ENCODE measurements at regions of chr10 and their contacts with region 1.

Region 1: GRCh38 chr10:100998991-100999741 is 442 bp upstream of the LZTS2 start:
- DNase-seq: peak; percentile 27 to 89
- H3K4me3 ChIP-seq: peak overlapping the region; percentile 79 to 92
- H3K27ac ChIP-seq: peak overlapping the region; percentile 99 to 100
- H3K4me1 ChIP-seq: peaks cover 23 to 32% of the 10 kb centered on the region in 2 donors
- H3K27me3 ChIP-seq: no peaks in the 10 kb centered on the region
- CTCF ChIP-seq: peak; percentile 94 to 99 (median 96)

Region 2: GRCh38 chr10:100535715-100536353 is 463.3 kb before region 1 on chr10 and contains the start of gene HIF1AN:
- intact Hi-C with region 1: loop called (anchors 10 kb)
- DNase-seq: peak; percentile 67 to 95
- H3K4me3 ChIP-seq: peak within 1 kb of the TSS; percentile 79 to 86
- H3K27ac ChIP-seq: peak within 1 kb of the TSS; percentile 70 to 81
- H3K4me1 ChIP-seq: peaks cover 0 to 14% of the 10 kb centered on the region in 2 donors
- H3K27me3 ChIP-seq: no peaks in the 10 kb centered on the region
- CTCF ChIP-seq: peak; percentile 67 to 97 (median 92)
- total RNA-seq, gene HIF1AN: 4.7 TPM

Region 3: DNA sequence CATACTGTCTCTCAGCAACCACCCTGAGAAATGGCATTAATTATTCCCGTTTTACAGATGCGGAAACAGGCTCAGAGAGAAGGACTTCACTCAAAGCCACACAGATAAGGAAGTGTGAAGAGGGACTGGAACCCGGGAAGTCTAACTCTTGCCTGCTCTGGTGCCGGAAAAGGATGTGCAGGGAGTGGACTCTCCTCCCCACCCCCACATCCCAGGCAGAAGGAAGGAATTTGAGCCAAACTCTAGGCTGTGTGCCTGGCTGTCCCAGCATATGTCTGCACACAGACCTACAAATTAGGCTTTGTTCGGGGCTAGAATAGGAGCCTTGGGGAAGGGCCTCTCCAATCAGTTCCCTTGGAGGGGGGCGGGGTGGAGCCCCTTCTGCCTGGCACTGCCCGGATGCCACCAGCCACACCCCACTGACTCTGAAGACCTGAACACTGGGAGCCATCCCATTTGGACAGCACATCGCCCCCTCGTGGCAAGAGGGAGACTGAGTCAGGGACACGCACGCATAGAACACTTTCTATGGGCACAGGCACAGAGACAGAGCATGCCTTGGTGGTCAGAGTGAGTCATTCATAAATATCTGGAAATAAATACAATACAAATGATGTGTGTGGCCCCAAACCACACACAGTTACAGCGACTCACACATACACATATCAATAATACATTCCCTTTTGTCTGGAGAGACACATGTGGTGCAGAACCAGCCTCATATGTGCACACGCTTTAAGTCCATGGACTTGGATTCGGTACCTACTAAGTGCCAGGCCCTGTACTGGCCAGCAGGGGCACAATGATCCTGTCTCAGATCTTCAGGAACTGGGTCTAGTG is 13.6 kb after region 1 on chr10:
- intact Hi-C with region 1: loop called (anchors 1 kb)
- DNase-seq: peak; percentile 73 to 96
- H3K4me3 ChIP-seq: no peak overlapping the region
- H3K27ac ChIP-seq: peak overlapping the region; percentile 22 to 55
- H3K4me1 ChIP-seq: peaks cover 9 to 10% of the 10 kb centered on the region in 2 donors
- H3K27me3 ChIP-seq: no peaks in the 10 kb centered on the region
- CTCF ChIP-seq: peak; percentile 77 to 83 (median 78)

Region 4: DNA sequence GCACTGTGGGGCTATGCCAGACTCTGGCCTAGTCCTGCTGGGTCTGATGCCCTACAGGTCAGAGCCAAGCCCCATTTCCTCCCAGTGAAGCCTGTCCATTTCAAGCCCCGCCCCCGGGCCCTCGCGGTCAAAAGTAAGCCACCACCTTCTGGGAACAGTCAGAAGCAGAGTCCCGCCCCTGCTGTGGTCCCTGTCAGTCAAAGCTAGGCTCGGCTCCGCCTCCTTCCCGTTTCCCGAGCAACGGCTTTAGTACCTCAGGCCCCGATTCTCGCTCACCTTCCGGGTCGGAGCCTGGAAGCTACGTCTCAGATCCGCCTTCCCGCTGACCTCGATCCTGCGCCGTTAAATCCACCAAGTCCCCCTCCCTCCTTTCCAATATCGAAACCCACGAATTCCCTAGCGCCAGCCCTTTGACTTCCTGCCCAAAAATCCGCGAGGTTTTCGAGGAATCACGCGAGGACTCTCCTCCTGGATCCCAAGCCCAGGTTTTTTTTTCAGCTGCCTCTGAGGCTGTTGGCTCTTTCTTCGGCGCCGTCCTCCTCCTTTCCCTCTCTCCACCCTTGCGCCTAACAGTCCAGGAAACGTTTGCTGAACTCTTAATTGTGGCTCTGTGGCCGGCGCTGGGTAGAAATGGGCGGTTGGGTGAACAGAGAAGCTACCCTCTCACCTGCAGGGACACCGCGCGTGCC is 43.6 kb after region 1 on chr10:
- intact Hi-C with region 1: loop called (anchors 2 kb)
- DNase-seq: peak; percentile 96 to 99
- H3K4me3 ChIP-seq: peak overlapping the region; percentile 56 to 64
- H3K27ac ChIP-seq: peak overlapping the region; percentile 87 to 93
- H3K4me1 ChIP-seq: peaks cover 0 to 18% of the 10 kb centered on the region in 2 donors
- H3K27me3 ChIP-seq: peaks cover 6% of the 10 kb centered on the region
- CTCF ChIP-seq: no peak

Region 5: GRCh38 chr10:101067356-101068083 is 68.4 kb after region 1 on chr10:
- intact Hi-C with region 1: loop called (anchors 1 kb)
- DNase-seq: peak in 1 of 2 donors; percentile 89
- H3K4me3 ChIP-seq: peak overlapping the region; percentile 61 to 64
- H3K27ac ChIP-seq: peak overlapping the region; percentile 74 to 82
- H3K4me1 ChIP-seq: peaks cover 12 to 31% of the 10 kb centered on the region in 2 donors
- H3K27me3 ChIP-seq: no peaks in the 10 kb centered on the region
- CTCF ChIP-seq: peak; percentile 85 to 91 (median 89)

Region 6: GRCh38 chr10:102641880-102642735 is 1642.9 kb after region 1 on chr10:
- intact Hi-C with region 1: loop called (anchors 10 kb)
- DNase-seq: peak; percentile 96 to 99
- H3K4me3 ChIP-seq: peak overlapping the region; percentile 97
- H3K27ac ChIP-seq: peak overlapping the region; percentile 98
- H3K4me1 ChIP-seq: peaks cover 6 to 8% of the 10 kb centered on the region in 2 donors
- H3K27me3 ChIP-seq: no peaks in the 10 kb centered on the region
- CTCF ChIP-seq: no peak

Measured in ascending aorta (tissue), 2 donors.